Posterior vena cava (tissue), 2 donors: ENCODE measurements at regions of chr20 and their contacts with region 1.

Region 1: DNA sequence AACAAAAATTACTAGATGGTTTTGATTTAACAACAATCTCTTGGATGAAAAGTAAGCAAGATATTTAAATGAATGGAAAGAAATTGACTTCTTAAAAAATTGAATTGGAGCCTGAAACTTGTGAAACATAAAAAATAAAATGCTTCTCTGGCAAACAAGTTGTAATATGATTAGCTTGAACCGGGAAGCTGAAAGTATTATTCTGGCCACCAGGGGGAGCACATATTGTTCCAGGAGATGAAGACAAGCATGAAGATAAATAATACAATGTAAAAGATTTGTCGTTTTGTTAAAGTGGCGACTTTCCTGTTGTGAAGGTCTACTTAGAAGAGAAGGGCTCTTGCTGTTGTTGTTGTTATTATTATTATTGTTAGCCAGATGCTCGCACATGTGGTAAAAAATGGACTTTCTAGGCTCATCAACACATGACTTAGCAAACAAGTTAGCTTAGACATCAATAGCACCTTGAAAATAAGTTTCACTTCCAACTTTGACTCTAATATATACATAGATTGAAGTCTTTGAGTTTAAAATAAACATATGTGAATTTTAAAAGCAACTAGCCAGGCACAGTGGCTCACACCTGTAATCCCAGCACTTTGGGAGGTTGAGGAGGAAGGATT is 14.2 kb downstream of the PAX1 start:
- DNase-seq: no peak

Region 2: DNA sequence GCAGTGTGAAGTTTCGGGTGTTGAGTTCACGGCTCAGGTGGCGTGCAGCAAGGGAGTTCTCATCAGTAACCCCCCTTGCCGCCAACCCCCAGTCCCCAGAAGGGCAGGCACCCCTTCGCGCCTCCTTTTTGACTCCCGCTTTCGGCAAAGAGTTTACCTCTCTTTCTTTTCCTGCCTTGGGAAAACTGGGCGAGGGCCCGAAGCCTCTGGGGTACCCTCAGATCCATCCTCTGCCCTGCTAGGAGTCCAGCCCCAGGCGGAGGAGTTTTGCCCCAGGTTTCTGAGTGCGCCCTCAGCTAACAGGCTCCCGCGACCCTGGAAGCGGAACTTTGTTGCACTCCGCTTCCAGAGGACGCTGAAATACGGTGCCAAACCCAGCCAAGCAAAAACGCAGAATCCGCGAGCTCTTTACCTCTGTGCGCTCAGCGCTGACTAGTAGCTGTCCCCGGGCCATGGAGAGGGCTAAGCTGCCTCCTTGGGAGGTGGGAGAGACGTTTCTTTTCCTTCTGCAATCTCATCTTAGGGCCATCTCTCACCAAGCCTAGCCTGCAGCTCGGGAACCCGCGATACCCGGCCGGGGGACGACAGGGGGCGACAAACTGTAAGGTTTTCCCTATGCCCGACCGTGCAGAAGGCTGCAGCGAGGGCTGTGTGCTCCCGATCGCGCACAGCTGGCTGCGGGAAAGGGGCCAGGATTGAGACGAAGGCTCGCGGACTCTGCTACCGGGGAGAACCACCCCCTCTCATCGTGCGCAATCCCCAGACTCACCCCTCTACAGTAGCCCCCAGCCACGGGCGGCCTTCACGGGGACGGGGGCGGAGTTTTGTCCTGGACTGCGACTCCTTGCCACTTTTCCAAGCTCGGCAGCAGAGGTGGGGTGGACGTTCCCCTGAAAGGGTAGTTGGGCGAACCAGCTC is 16.9 kb before region 1 on chr20:
- intact Hi-C with region 1: no loop called
- DNase-seq: peak; percentile 84

Region 3: GRCh38 chr20:21862259-21862946 is 142.7 kb after region 1 on chr20:
- intact Hi-C with region 1: no loop called
- DNase-seq: no peak

Region 4: GRCh38 chr20:21968486-21968885 is 248.8 kb after region 1 on chr20:
- intact Hi-C with region 1: no loop called
- DNase-seq: no peak

Region 5: GRCh38 chr20:22100686-22101085 is 381.0 kb after region 1 on chr20:
- intact Hi-C with region 1: loop called in 1 of 2 experiments (anchors 5 kb)
- DNase-seq: no peak